CD8-positive, alpha-beta memory T cell (primary cell): ENCODE measurements at regions of chr20 and their contacts with region 1.

Region 1: DNA sequence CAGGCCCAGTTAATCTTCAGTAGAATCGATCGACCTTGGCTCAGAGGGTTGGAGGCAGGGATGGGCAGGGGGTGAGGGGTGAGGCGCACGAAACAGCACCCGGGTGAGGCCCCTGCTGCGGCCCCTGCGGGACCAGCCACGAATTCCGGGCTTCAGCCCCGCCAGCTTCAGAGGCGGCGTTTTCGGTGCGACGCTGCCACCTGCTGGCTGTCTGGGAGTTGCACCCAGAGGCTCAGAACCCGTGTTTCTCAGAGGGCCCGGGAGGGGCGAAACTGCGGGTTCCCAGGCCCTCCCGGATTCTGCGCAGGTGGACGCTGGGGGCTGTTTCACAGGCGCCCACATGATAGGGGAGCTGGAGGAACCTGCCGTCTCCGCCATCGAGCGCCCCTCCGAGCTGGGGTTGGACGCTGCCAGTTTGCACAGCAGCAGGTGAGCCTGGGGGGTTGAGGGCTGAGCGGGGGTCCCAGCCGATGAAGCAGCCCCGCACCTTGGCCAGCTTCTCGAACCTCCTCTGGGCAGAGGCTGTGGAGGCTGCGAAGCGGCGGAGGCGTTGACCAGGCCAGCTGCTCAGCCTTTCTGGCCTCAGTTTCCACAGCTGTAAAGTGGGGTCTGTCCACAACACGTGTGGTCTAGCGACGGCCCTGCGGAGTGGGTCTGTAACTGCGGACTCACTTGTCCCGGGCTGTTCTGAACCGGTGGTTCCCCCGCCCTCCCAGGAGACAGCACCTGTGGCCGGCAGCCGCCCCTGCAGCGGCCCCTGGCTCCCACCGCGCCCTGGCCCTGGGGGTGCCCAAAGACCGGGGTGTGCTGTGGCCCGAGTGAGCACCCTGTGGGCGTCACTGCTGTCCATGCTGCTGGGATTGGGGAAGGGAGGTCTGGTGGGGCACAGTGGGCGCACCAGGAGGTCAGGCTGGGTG is 2.5 kb upstream of the BHLHE23 start:
- DNase-seq: peak; percentile 75 to 86 (median 78)
- H3K4me3 ChIP-seq: peak overlapping the region; percentile 34
- H3K4me3 Mint-ChIP-seq: peak overlapping the region in 6 of 7 donors; percentile 3 to 95 (median 90)
- H3K27ac ChIP-seq: no peak overlapping the region
- H3K27ac Mint-ChIP-seq: peak overlapping the region in 5 of 8 donors; percentile 5 to 94 (median 90)
- H3K4me1 ChIP-seq: peaks cover 27% of the 10 kb centered on the region
- H3K4me1 Mint-ChIP-seq: peaks cover 14 to 40% (median 21%) of the 10 kb centered on the region in 3 donors
- H3K27me3 ChIP-seq: peaks cover 49% of the 10 kb centered on the region
- H3K27me3 Mint-ChIP-seq: peaks cover 39 to 48% of the 10 kb centered on the region in 2 donors

Region 2: GRCh38 chr20:62972270-62973032 is 36.9 kb before region 1 on chr20:
- CTCF ChIA-PET with region 1: interaction called, 11 read pairs
- POLR2A ChIA-PET with region 1: interaction called, 4 read pairs
- DNase-seq: peak; percentile 73 to 89 (median 76)
- H3K4me3 ChIP-seq: no peak overlapping the region
- H3K4me3 Mint-ChIP-seq: peak overlapping the region in 6 of 7 donors; percentile 49 to 86 (median 76)
- H3K27ac ChIP-seq: no peak overlapping the region
- H3K27ac Mint-ChIP-seq: peak overlapping the region in 6 of 8 donors; percentile 10 to 75 (median 43)
- H3K4me1 ChIP-seq: peaks cover 16% of the 10 kb centered on the region
- H3K4me1 Mint-ChIP-seq: peaks cover 16 to 32% (median 17%) of the 10 kb centered on the region in 3 donors
- H3K27me3 ChIP-seq: peaks cover 28% of the 10 kb centered on the region
- H3K27me3 Mint-ChIP-seq: peaks cover 42 to 48% of the 10 kb centered on the region in 2 donors

Region 3: DNA sequence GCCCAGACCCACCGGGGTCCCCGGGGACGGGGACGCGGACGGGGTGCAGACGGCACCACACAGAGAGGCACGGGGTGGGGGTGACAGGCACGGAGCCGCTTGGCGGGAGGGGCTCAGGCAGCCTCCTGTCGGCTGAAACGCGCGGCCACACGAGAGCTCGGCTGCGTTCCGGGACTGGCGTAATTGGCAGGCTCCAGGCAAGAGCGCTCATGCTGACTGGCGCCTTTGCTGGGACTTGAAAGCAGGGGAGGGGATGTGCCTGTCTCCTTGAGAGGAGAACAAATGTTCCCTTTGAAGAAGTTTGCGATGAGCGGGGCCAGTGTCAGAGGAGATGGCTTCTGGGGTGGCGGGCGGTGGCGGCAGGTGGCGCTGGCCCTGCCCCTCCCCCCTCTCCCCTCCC is 28.3 kb before region 1 on chr20:
- CTCF ChIA-PET with region 1: interaction called, 18 read pairs
- POLR2A ChIA-PET with region 1: interaction called, 4 read pairs
- DNase-seq: peak in 4 of 5 donors; percentile 17 to 69 (median 30)
- H3K4me3 ChIP-seq: no peak overlapping the region
- H3K4me3 Mint-ChIP-seq: peak overlapping the region in 5 of 7 donors; percentile 11 to 55 (median 41)
- H3K27ac ChIP-seq: no peak overlapping the region
- H3K27ac Mint-ChIP-seq: peak overlapping the region in 3 of 8 donors; percentile 29 to 56 (median 34)
- H3K4me1 ChIP-seq: peaks cover 54% of the 10 kb centered on the region
- H3K4me1 Mint-ChIP-seq: peaks cover 27 to 62% (median 29%) of the 10 kb centered on the region in 3 donors
- H3K27me3 ChIP-seq: peaks cover 42% of the 10 kb centered on the region
- H3K27me3 Mint-ChIP-seq: peaks cover 50 to 68% of the 10 kb centered on the region in 2 donors